Upper lobe of right lung (tissue), 1 donor: ENCODE measurements at regions of chr2 and their contacts with region 1.

Region 1: GRCh38 chr2:28594289-28595108 is 98.6 kb downstream of the PLB1 start:
- DNase-seq: peak; percentile 92
- ATAC-seq: peak; percentile 93
- H3K4me3 ChIP-seq: peak overlapping the region; percentile 3
- H3K27ac ChIP-seq: peak overlapping the region; percentile 65
- H3K4me1 ChIP-seq: peaks cover 9% of the 10 kb centered on the region
- H3K27me3 ChIP-seq: no peaks in the 10 kb centered on the region
- CTCF ChIP-seq: peak; percentile 85

Region 2: DNA sequence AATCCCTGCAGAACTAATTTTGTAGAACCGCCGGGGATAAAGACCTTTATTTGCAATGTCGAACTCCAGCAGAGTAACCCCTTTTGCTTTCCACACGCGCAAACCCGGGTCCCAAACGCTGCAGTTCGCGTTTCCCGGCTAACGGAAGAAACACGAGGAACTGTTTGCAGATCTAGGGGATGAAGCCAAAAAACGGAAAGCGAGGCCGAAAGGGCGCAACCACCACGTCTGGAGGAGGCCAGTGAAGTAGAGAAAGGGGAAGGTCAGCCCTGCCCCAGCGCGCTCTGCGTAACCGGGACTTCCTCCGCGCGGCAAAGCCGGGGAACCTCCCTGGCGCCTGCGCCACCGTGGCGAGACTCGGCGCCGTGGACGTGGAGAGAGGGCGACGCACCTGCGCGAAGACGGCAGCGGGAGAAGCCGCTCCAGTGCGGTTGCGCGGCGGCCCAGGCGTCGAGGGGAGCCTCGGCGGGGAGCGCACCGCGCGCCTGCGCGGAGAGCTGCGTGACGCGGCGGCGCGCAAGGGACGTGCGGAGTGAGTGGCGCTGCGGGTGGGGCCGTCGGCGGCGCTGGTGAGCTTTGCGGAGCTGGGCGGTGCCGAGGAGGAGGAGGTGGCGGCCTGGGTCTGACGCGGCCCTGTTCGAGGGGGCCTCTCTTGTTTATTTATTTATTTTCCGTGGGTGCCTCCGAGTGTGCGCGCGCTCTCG is 156.9 kb after region 1 on chr2 and contains the start of gene PPP1CB:
- intact Hi-C with region 1: loop called (anchors 10 kb)
- DNase-seq: peak; percentile 98
- ATAC-seq: peak; percentile 97
- H3K4me3 ChIP-seq: peak within 1 kb of the TSS; percentile 89
- H3K27ac ChIP-seq: peak within 1 kb of the TSS; percentile 99
- H3K4me1 ChIP-seq: peaks cover 40% of the 10 kb centered on the region
- H3K27me3 ChIP-seq: no peaks in the 10 kb centered on the region
- CTCF ChIP-seq: peak; percentile 32
- total RNA-seq, gene PPP1CB: 256 TPM